ENCODE measurements at regions of chr22 and their contacts with region 1.

Region 1: GRCh38 chr22:37043828-37044538 is 7.6 kb upstream of the KCTD17 start:
- DNase-seq: no peak
- ATAC-seq: peak; percentile 99
- H3K4me3 ChIP-seq: no peak overlapping the region
- H3K27ac ChIP-seq: no peak overlapping the region
- H3K4me1 ChIP-seq: peaks cover 10% of the 10 kb centered on the region
- H3K27me3 ChIP-seq: peaks cover 0 to 2% of the 10 kb centered on the region in 2 experiments; a peak in 1 of 4 replicates
- CTCF ChIP-seq: peak; percentile 81 to 92 (median 85)
- EP300 ChIP-seq: no peak
- POLR2A ChIP-seq: no peak
- RAD21 ChIP-seq: peak; percentile 58

Region 2: GRCh38 chr22:36781656-36782627 is 262.0 kb before region 1 on chr22:
- CTCF ChIA-PET with region 1: interaction called, 6 read pairs
- POLR2A ChIA-PET with region 1: no interaction called
- RAD21 ChIA-PET with region 1: interaction called, 21 read pairs
- SMC1A ChIA-PET with region 1: interaction called, 11 read pairs
- in situ Hi-C with region 1: no loop called
- intact Hi-C with region 1: loop called (anchors 1 kb)
- DNase-seq: peak; percentile 33
- ATAC-seq: peak; percentile 98
- H3K4me3 ChIP-seq: no peak overlapping the region
- H3K27ac ChIP-seq: no peak overlapping the region
- H3K4me1 ChIP-seq: peaks cover under 1% of the 10 kb centered on the region; the same call in 1 of the 2 replicates
- H3K27me3 ChIP-seq: peaks cover 0 to 5% of the 10 kb centered on the region in 2 experiments; a peak in 1 of 4 replicates
- CTCF ChIP-seq: peak; percentile 90 to 97 (median 95)
- EP300 ChIP-seq: no peak; a peak in 1 of 4 replicates
- POLR2A ChIP-seq: no peak
- RAD21 ChIP-seq: peak; percentile 84

Region 3: GRCh38 chr22:36952276-36952675 is 91.7 kb before region 1 on chr22:
- CTCF ChIA-PET with region 1: no interaction called
- POLR2A ChIA-PET with region 1: no interaction called
- RAD21 ChIA-PET with region 1: no interaction called
- SMC1A ChIA-PET with region 1: no interaction called
- in situ Hi-C with region 1: no loop called
- intact Hi-C with region 1: no loop called
- DNase-seq: no peak
- ATAC-seq: no peak
- H3K4me3 ChIP-seq: no peak overlapping the region
- H3K27ac ChIP-seq: no peak overlapping the region
- H3K4me1 ChIP-seq: peaks cover 17% of the 10 kb centered on the region
- H3K27me3 ChIP-seq: no peaks in the 10 kb centered on the region
- CTCF ChIP-seq: no peak
- EP300 ChIP-seq: no peak
- POLR2A ChIP-seq: no peak
- RAD21 ChIP-seq: no peak

Region 4: DNA sequence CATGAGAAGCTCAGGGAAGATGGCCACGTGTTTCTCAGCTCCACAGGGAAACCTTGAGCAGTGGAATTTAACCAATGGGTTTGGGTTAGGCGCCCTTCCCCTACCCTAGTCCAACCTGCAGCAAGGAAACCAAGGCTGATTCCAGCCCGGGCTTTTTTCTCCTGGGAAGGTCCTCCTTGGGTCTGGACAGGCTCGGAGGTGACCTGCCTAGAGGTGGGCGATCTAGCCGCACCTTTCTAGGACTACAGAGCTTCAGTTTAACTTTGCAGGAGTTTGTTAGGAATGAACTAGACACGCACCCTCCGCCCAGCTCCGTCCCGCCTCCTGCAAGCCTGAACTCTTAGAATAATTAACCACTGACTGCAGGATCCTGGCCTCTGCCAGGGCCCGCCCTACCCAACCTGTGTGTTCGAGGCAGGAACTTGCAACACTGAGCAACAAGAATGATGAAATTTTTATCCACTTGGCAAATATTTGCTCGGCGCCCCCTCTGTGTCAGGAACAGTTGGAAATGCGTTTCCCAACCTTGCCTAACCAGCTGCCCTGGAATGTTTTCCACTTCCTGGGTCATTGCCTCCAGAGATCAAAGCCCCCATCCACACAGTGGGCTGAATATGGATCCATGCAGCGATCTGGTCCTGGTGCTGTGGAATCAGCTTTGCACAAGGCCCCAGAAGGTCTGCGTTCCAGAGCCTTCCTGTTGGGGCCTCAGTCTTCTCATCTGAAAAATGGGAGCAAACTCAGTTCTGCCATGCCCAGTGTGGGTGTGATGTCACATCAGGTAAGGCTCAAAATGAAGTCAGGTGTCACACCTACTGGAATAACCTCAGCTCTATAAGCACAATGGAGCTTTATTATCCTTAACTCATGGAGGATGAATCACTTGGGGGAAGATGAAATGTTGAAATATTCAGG is 11.2 kb before region 1 on chr22:
- CTCF ChIA-PET with region 1: interaction called, 15 read pairs
- POLR2A ChIA-PET with region 1: no interaction called
- RAD21 ChIA-PET with region 1: interaction called, 5 read pairs
- SMC1A ChIA-PET with region 1: interaction called, 4 read pairs
- in situ Hi-C with region 1: no loop called
- intact Hi-C with region 1: no loop called
- DNase-seq: no peak
- ATAC-seq: no peak
- H3K4me3 ChIP-seq: no peak overlapping the region
- H3K27ac ChIP-seq: no peak overlapping the region
- H3K4me1 ChIP-seq: no peaks in the 10 kb centered on the region
- H3K27me3 ChIP-seq: no peaks in the 10 kb centered on the region; a peak in 1 of 4 replicates
- CTCF ChIP-seq: no peak
- EP300 ChIP-seq: no peak
- POLR2A ChIP-seq: no peak
- RAD21 ChIP-seq: no peak